ENCODE measurements at regions of chr16 and their contacts with region 1.

Region 1: DNA sequence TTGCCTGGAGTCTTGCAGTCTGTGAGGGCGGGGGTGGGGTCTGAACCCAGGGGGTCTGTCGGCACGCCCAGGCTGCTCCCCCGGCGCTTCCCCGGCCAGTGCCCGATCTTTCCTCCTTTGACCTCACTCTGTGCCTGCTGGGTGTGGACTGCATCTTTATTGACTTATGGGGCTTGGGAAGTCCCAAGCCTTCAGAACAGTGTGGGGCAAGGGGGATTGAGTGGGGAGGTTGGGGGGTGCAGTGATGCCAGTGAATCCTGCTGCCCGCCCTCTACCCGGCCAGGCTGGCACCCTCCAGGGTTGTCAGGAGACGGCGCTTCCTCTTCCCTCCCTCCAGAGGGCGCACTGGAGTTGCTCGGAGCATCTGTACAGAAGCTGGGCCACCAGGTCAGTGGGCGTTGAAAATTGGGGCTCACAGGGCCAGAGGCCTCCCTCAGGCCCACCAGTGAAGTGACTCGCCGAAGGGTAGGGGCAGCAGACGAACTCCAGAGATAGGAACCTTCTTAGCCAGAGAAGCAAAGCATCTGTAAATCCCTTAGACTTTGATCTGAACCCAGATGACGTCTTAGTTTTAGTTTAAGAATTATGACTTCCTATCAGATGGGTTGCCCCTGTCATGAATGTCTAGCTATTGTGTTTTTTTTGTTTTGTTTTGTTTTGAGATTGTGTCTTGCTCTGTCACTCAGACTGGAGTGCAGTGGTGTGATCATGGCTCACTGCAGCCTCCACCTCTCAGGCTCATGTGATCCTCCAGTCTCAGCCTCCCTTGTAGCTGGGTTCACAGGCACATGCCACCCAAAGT is 184.8 kb upstream of the CIBAR2 start:
- DNase-seq: peak; percentile 78 to 86 (median 85)
- H3K4me3 ChIP-seq: no peak overlapping the region
- H3K27ac ChIP-seq: no peak overlapping the region
- H3K4me1 ChIP-seq: peaks cover 0 to 2% (median 0%) of the 10 kb centered on the region in 4 experiments
- H3K27me3 ChIP-seq: no peaks in the 10 kb centered on the region

Region 2: GRCh38 chr16:85206472-85207356 is 90.3 kb before region 1 on chr16:
- CTCF ChIA-PET with region 1: no interaction called
- POLR2A ChIA-PET with region 1: no interaction called
- DNase-seq: no peak
- H3K4me3 ChIP-seq: no peak overlapping the region
- H3K27ac ChIP-seq: no peak overlapping the region
- H3K4me1 ChIP-seq: peaks cover 0 to 18% (median 5%) of the 10 kb centered on the region in 4 experiments
- H3K27me3 ChIP-seq: no peaks in the 10 kb centered on the region

Region 3: DNA sequence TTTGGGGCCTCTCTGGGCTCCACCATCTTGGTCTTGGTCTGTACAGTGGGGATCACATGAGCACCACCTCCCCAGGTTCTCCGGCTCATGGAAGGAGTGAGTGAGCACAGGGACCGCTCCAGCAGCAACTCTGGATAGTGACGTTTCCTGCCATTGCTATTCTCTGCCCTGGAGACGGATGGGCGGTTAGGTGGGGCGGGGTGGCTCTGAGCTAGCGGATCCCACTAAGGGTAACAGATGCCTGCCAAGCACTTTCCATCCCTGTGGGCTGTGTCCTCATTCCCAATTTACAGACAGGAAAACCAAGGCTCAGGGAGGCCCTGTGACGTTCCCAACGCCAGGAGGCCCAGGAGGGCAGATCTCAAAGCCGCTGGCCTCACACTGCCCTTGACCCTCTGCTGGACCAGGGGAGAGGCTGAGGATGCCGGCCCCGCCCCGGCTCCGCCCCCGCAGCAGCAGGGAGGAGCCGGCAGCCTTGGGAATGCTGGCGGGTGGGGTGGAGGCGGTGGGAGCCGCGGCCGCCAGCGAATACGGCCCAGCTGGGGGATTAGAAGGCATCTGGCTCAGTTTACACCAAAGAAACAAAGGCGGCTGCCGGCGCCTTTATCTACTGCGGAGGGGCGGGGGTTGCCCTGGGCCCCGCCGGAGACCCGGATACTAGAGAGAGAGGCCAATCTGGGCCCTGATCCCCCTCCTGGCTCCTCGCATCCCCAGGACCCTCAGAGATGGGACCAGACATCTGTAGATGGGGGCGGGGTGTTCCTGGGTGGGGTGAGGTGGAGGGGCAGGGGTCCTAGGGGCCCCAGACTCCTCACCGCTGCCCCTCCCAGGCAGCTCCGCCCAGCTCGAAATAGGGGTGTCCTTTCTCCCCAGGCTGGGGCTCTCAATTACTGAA is 62.5 kb before region 1 on chr16:
- CTCF ChIA-PET with region 1: no interaction called
- POLR2A ChIA-PET with region 1: no interaction called
- DNase-seq: no peak
- H3K4me3 ChIP-seq: peak overlapping the region in 2 of 7 experiments; percentile 2 to 13
- H3K27ac ChIP-seq: no peak overlapping the region
- H3K4me1 ChIP-seq: peaks cover 0 to 33% (median 23%) of the 10 kb centered on the region in 4 experiments
- H3K27me3 ChIP-seq: no peaks in the 10 kb centered on the region

Region 4: DNA sequence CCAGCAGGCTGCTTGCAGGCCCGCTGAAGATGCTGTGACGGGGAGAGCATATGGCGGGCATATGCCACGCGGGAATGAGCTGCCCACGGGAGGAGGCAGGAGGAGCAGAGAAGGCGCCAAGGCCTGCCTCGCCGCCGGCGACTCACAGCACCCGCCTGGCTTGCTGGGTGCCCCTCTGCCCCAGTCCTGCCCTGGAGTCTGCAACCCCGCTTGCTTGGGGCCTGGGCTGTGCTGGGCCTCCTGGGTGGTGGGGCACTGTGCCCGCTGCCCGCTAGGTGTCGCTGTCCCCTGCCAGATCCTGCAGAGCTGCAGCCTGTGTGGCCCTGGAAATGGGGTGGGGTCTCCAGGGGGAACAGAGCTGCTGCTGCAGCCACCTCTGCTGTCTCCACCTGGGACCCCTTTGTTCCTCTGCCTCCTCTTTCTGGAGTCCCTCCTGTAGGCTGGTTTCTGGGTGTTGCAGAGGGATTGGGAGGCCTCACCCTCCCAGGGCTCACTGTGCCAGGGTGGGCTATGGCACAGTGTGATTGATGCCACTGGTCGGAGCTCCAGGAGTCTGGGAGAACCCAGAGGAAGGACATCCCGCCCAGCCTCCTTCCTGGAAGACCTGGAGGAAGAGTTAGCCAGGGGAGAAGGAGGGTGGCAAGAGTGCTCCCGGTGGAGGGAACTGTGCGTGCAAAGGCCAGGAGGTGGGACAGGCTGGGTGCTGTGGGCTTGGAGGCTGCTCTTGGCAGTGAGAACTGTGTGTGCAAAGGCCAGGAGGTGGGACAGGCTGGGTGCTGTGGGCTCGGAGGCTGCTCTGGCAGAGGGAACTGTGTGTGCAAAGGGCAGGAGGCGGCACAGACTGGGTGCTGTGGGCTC is 43.7 kb before region 1 on chr16:
- CTCF ChIA-PET with region 1: interaction called, 19 read pairs
- POLR2A ChIA-PET with region 1: no interaction called
- DNase-seq: peak; percentile 57 to 86 (median 79)
- H3K4me3 ChIP-seq: no peak overlapping the region
- H3K27ac ChIP-seq: no peak overlapping the region
- H3K4me1 ChIP-seq: peaks cover 0 to 22% (median 15%) of the 10 kb centered on the region in 4 experiments
- H3K27me3 ChIP-seq: no peaks in the 10 kb centered on the region

Region 5: GRCh38 chr16:85316321-85316919 is 19.4 kb after region 1 on chr16:
- CTCF ChIA-PET with region 1: interaction called, 10 read pairs
- POLR2A ChIA-PET with region 1: no interaction called
- DNase-seq: peak; percentile 70 to 84 (median 80)
- H3K4me3 ChIP-seq: no peak overlapping the region
- H3K27ac ChIP-seq: no peak overlapping the region
- H3K4me1 ChIP-seq: peaks cover 3 to 54% (median 42%) of the 10 kb centered on the region in 4 experiments
- H3K27me3 ChIP-seq: no peaks in the 10 kb centered on the region